ENCODE measurements at regions of chr13 and their contacts with region 1.

Region 1: GRCh38 chr13:30465585-30466357 is at the start of gene HMGB1:
- DNase-seq: peak; percentile 98
- H3K4me3 ChIP-seq: peak within 1 kb of the TSS; percentile 48 to 69 (median 66)
- H3K27ac ChIP-seq: peak within 1 kb of the TSS; percentile 85
- H3K4me1 ChIP-seq: peaks cover 25% of the 10 kb centered on the region
- H3K27me3 ChIP-seq: no peaks in the 10 kb centered on the region
- CTCF ChIP-seq: no peak
- POLR2A ChIP-seq: peak; percentile 80
- total RNA-seq, gene HMGB1: 670 and 675 TPM in 2 replicates

Region 2: GRCh38 chr13:30306762-30307193 is 159.0 kb before region 1 on chr13:
- CTCF ChIA-PET with region 1: no interaction called
- POLR2A ChIA-PET with region 1: no interaction called
- dilution Hi-C with region 1: no loop called
- intact Hi-C with region 1: loop called (anchors 1 kb)
- DNase-seq: peak; percentile 90
- H3K4me3 ChIP-seq: peak overlapping the region; percentile 36 to 88 (median 77)
- H3K27ac ChIP-seq: peak overlapping the region; percentile 86
- H3K4me1 ChIP-seq: peaks cover 24% of the 10 kb centered on the region
- H3K27me3 ChIP-seq: no peaks in the 10 kb centered on the region
- CTCF ChIP-seq: no peak
- POLR2A ChIP-seq: peak; percentile 50

Region 3: DNA sequence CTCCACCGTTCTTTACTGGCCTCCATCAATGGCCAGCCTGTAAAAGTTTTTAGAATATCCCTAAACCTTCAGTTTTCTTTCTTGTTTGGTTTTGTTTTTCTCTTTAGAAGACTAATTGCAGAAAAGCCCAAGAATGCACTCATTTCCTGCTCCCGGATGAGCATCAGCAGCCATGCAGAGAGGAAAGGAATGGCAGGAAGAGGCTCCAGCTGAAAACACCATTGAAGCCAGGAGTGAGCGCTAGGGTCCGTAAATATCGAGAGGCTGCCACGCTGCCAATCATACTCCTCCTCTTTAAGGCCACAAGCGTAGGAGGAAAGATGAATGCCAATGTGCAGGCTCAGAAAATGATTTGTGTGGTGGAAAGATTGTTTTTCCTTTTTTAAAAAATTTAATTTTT is 100.9 kb before region 1 on chr13:
- CTCF ChIA-PET with region 1: no interaction called
- POLR2A ChIA-PET with region 1: no interaction called
- dilution Hi-C with region 1: no loop called
- intact Hi-C with region 1: loop called (anchors 1 kb)
- DNase-seq: peak; percentile 95
- H3K4me3 ChIP-seq: peak overlapping the region in 1 of 3 experiments; percentile 29
- H3K27ac ChIP-seq: peak overlapping the region; percentile 95
- H3K4me1 ChIP-seq: peaks cover 30% of the 10 kb centered on the region
- H3K27me3 ChIP-seq: no peaks in the 10 kb centered on the region
- CTCF ChIP-seq: no peak
- POLR2A ChIP-seq: peak; percentile 61

Region 4: DNA sequence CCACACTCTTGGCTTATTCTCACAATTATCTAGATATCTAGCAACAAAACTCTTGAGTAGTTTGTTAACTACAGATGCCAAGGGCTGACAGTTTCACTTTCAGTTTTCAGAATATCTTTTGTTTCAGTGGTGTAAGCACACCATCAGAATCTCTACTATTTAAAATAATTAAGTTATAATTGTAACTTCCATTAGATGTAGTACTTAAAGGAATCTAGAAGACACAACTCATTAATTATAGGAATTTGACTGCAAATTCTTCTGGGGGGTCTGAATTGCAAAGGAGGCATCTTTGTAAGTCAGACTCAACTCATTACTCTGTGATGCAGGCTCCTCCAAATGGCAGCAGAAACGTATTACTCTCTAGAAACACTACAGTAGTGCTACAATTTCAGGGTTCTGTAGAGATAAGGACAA is 107.1 kb after region 1 on chr13:
- CTCF ChIA-PET with region 1: no interaction called
- POLR2A ChIA-PET with region 1: no interaction called
- dilution Hi-C with region 1: no loop called
- intact Hi-C with region 1: loop called (anchors 1 kb)
- DNase-seq: peak; percentile 77
- H3K4me3 ChIP-seq: peak overlapping the region; percentile 0 to 88 (median 73)
- H3K27ac ChIP-seq: peak overlapping the region; percentile 44
- H3K4me1 ChIP-seq: peaks cover 9% of the 10 kb centered on the region
- H3K27me3 ChIP-seq: no peaks in the 10 kb centered on the region
- CTCF ChIP-seq: peak in 1 of 2 donors; percentile 12
- POLR2A ChIP-seq: no peak

Region 5: DNA sequence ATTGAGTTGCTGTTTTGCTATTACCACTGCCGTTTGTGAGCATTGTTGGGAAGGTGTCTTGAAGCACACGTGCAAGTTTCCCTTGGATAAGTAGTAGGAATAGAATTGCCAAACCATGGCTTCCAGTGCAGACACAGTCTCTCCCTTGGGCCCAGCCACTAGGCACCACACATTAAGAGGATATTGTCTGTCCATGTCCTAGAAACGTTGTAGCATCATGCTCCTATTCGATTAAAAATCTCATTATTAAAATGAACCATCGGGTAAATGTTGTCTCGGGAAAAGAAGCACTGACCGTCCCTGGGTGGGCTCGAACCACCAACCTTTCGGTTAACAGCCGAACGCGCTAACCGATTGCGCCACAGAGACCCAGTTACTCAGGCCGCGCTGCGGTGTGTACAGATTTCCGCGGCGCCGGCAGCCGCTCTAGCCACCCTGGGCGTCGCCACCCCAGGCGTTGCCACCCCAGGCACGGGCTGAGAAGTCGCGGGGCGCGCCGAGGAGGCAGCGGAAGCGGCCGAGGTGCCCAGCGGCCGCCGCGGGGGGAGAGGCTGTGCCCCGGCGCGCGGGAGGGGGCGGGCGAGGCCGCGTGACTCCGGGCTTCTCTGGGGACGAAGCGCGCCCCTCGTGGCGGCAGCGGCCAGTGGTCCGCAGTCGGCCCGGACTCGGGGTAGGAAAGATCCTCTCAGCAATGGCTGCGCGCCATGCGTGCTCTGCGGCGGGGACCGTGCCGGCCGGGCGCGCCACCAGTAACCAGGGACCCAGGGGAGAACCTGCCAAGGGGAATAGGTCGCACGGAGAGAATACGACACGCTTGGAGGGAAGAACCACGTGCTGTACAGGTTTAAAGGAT is 208.1 kb after region 1 on chr13:
- CTCF ChIA-PET with region 1: no interaction called
- POLR2A ChIA-PET with region 1: no interaction called
- dilution Hi-C with region 1: no loop called
- intact Hi-C with region 1: loop called (anchors 5 kb)
- DNase-seq: peak; percentile 88
- H3K4me3 ChIP-seq: peak overlapping the region; percentile 39 to 48 (median 43)
- H3K27ac ChIP-seq: peak overlapping the region; percentile 66
- H3K4me1 ChIP-seq: peaks cover 8% of the 10 kb centered on the region
- H3K27me3 ChIP-seq: no peaks in the 10 kb centered on the region
- CTCF ChIP-seq: peak; percentile 82 to 83
- POLR2A ChIP-seq: no peak